Endothelial cell of umbilical vein (primary cell): ENCODE measurements at regions of chr1 and their contacts with region 1.

Region 1: GRCh38 chr1:206635080-206635977 is at the start of gene DYRK3:
- DNase-seq: peak; percentile 93
- H3K4me3 ChIP-seq: peak within 1 kb of the TSS; percentile 72 to 90 (median 80)
- H3K27ac ChIP-seq: peak within 1 kb of the TSS; percentile 59
- H3K4me1 ChIP-seq: peaks cover 13% of the 10 kb centered on the region
- H3K27me3 ChIP-seq: no peaks in the 10 kb centered on the region
- CTCF ChIP-seq: peak in 1 of 2 donors; percentile 28
- POLR2A ChIP-seq: peak; percentile 88
- total RNA-seq, gene DYRK3: 7.4 and 10.9 TPM in 2 replicates

Region 2: DNA sequence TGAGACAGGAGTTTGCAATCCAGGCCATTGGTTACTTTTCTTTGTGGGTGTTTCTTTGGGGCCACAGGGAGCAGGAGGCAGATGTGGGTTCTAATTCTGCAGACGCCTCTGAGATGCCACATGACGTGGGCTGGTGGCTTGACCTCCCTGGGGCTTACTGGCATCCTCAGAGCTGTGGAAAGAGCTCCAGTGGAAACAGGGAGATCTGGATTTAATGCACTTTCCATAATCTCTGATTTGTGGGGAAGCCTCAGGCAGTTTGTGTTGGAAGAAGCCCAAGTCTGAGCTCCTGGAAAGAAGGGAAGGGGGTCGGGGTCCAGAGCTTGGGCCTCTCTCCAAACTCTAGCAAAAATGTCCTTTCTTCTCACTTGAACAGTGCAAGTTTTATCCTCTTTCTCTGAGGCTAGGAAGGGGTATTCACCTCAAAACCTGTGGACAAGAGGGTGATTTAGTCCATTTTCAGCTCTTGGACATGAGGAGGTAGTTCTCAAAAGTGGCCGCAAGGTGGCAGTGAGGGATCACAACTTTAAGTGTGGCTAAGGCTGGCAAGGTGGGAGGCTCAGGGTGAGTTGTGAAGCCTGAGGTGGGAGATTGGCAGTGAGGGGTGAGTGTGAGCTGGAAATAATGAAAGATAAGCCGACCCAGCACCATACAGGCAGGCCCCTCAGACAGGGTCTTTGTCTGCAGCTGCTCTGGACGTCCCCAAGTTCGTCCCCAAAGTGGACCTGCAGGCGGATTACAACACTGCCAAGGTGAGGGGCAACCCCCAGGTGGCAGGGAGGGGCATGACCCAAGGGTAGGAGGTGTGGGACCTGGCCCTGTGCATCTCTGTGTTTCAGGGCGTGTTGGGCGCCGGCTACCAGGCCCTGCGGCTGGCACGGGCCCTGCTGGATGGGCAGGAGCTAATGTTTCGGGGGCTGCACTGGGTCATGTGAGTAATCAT is 155.9 kb before region 1 on chr1:
- CTCF ChIA-PET with region 1: interaction called, 10 read pairs
- POLR2A ChIA-PET with region 1: no interaction called
- dilution Hi-C with region 1: no loop called
- intact Hi-C with region 1: no loop called
- DNase-seq: peak; percentile 74
- H3K4me3 ChIP-seq: no peak overlapping the region
- H3K27ac ChIP-seq: no peak overlapping the region
- H3K4me1 ChIP-seq: no peaks in the 10 kb centered on the region
- H3K27me3 ChIP-seq: no peaks in the 10 kb centered on the region
- CTCF ChIP-seq: peak; percentile 76 to 77
- POLR2A ChIP-seq: no peak

Region 3: DNA sequence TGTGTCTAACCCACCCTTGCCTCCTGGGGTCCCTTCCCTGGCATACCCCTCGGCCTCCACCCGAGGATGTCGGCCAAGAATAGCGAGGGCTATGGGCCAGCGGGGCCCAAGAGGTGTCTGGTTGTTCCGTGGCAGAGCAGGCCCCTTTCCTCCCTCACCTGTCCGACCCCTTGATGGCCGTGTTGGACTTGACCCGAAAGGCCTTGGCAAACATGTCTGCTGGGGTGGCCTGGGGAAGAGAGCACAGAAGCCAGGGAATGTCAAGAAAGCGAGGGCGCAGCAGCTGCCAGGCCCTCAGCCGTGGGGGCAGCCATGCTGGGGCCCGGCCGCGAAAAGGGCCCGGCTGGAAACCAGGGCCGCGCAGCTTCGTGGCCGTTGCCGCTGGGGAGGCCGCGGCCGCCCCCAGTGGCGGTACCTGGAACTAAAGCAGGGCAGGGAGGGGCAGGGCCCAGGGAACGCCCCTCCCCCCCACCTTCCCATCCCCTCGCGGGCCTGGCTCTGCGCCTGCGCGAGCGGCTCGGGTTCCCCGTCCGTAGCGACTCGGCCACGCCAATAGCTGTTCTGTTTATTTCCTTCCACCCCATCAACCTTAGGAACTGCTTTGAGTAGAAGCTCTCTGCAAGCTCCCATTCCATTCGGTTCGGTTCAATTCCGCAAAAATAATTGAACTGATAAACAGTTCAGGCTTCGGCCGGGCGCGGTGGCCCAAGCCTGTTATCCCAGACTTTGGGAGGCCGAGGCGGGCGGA is 23.0 kb before region 1 on chr1 and contains the start of gene EIF2D:
- CTCF ChIA-PET with region 1: interaction called, 43 read pairs
- POLR2A ChIA-PET with region 1: interaction called, 11 read pairs
- dilution Hi-C with region 1: no loop called
- intact Hi-C with region 1: loop called (anchors 1 kb)
- DNase-seq: peak; percentile 93
- H3K4me3 ChIP-seq: peak within 1 kb of the TSS; percentile 69 to 89 (median 85)
- H3K27ac ChIP-seq: peak within 1 kb of the TSS; percentile 78
- H3K4me1 ChIP-seq: peaks cover 7% of the 10 kb centered on the region
- H3K27me3 ChIP-seq: peaks cover 4 to 13% of the 10 kb centered on the region in 2 experiments
- CTCF ChIP-seq: peak; percentile 91 to 96
- POLR2A ChIP-seq: peak; percentile 96
- total RNA-seq, gene EIF2D: 47.6 and 48.0 TPM in 2 replicates

Region 4: DNA sequence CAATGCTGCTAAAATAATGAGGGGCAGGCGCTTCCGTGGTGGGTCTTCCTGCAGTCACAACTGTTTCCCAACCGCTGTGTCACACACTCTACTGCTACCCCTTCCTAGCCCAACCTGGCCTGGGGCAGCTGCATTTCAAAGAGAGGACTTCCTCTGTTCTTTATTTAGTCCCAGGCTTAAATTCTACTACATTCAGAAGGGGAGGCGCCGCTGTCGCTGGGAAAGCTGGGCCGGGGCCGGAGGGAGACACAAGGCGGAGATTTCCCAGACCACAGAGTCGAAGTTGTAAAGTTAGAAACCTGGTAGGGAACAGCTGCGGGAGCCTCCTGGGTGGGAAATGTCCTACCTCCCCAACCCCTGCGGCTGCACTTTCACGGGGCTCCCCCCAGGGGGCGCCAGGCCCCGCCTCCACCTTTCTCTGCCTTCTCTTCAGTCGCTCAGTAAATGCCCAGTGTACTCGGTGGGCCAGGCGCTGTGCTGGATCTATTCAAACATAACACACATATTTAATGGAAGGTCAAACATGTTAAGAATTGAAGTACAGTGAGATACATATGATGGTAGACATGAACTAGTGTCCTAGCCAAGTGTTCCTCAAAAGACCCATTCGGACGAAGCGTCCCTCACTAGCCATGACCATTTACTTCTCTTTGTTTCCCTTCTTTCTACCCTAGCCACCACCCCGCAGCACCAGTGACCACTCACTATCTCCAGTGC is 23.1 kb after region 1 on chr1:
- CTCF ChIA-PET with region 1: interaction called, 663 read pairs
- POLR2A ChIA-PET with region 1: no interaction called
- dilution Hi-C with region 1: no loop called
- intact Hi-C with region 1: loop called (anchors 1 kb)
- DNase-seq: peak; percentile 26
- H3K4me3 ChIP-seq: no peak overlapping the region
- H3K27ac ChIP-seq: no peak overlapping the region
- H3K4me1 ChIP-seq: no peaks in the 10 kb centered on the region
- H3K27me3 ChIP-seq: peaks cover 28 to 30% of the 10 kb centered on the region in 2 experiments
- CTCF ChIP-seq: peak; percentile 89 to 90
- POLR2A ChIP-seq: no peak

Region 5: GRCh38 chr1:206808615-206809014 is 173.3 kb after region 1 on chr1:
- CTCF ChIA-PET with region 1: interaction called, 6 read pairs
- POLR2A ChIA-PET with region 1: no interaction called
- dilution Hi-C with region 1: no loop called
- intact Hi-C with region 1: loop called (anchors 5 kb)
- DNase-seq: no peak
- H3K4me3 ChIP-seq: no peak overlapping the region
- H3K27ac ChIP-seq: no peak overlapping the region
- H3K4me1 ChIP-seq: no peaks in the 10 kb centered on the region
- H3K27me3 ChIP-seq: peaks cover 3 to 13% of the 10 kb centered on the region in 2 experiments
- CTCF ChIP-seq: peak in 1 of 2 donors; percentile 21
- POLR2A ChIP-seq: no peak